ENCODE measurements at regions of chr12 and their contacts with region 1.

Region 1: DNA sequence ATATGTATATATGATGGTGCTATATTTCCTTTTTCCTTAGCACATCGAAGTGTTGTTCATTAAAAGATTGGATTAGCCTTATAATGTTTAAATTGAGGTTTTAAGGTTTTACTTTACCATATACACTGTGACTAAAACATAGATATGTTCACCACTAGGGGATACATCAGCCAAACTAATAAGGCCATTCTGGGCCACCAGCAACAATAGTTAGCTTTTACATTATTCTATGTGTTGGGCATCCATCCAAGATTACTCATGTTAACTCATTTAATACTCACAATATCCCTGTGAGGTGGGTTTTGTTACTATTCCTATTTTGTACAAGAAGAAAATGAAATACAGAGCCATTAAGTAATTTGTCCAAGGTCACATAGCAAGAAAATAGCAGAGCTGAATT is 202.6 kb upstream of the AVPR1A start:
- DNase-seq: peak in 2 of 3 donors; percentile 10 to 16
- H3K4me3 ChIP-seq: no peak overlapping the region
- H3K27ac ChIP-seq: no peak overlapping the region
- H3K4me1 ChIP-seq: no peaks in the 10 kb centered on the region
- H3K27me3 ChIP-seq: no peaks in the 10 kb centered on the region

Region 2: DNA sequence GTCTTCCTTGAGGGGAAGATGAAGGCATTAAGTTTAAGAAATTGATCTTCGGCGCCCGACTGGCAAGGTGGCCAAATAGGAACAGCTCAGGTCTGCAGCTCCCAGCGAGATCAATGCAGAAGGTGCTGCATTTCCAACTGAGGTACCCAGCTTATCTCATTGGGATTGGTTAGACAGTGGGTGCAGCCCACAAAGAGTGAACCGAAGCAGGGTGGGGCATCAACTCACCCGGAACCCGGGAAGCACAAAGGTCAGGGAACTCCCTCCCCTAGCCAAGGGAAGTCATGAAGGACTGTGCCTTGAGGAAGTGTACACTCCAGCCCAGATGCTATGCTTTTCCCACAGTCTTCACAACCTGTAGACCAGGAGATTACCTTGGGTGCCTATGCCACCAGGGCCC is 157.4 kb before region 1 on chr12:
- CTCF ChIA-PET with region 1: no interaction called
- POLR2A ChIA-PET with region 1: interaction called, 11 read pairs
- DNase-seq: no peak
- H3K4me3 ChIP-seq: no peak overlapping the region
- H3K27ac ChIP-seq: no peak overlapping the region
- H3K4me1 ChIP-seq: no peaks in the 10 kb centered on the region
- H3K27me3 ChIP-seq: no peaks in the 10 kb centered on the region

Region 3: GRCh38 chr12:63276537-63277365 is 76.8 kb before region 1 on chr12:
- CTCF ChIA-PET with region 1: no interaction called
- POLR2A ChIA-PET with region 1: no interaction called
- DNase-seq: peak; percentile 39 to 63 (median 56)
- H3K4me3 ChIP-seq: peak overlapping the region in 3 of 7 experiments; percentile 37 to 62 (median 49)
- H3K27ac ChIP-seq: no peak overlapping the region
- H3K4me1 ChIP-seq: peaks cover 0 to 2% (median 0%) of the 10 kb centered on the region in 4 experiments
- H3K27me3 ChIP-seq: no peaks in the 10 kb centered on the region

Region 4: DNA sequence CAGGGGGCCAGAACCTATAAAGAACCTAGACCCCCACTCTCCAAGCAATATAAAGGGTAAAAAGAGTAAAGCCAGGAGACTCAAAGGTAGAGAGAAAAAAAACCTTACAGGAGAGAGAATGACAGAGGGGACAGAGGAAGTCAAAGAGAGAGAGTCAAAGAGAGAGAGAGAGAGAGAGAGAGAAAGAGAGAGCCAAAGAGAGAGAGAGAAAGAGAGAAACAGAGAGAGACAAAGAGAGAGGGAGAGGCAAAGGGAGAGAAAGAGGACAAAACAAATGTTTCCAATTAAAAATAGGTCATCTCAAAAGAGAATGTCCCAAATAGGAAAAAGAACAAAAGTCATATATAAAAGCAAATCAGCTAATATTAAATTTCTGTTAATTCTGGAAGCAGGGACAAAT is 63.2 kb after region 1 on chr12:
- CTCF ChIA-PET with region 1: no interaction called
- POLR2A ChIA-PET with region 1: no interaction called
- DNase-seq: no peak
- H3K4me3 ChIP-seq: no peak overlapping the region
- H3K27ac ChIP-seq: no peak overlapping the region
- H3K4me1 ChIP-seq: peaks cover 0 to under 1% (median under 1%) of the 10 kb centered on the region in 4 experiments
- H3K27me3 ChIP-seq: no peaks in the 10 kb centered on the region